ENCODE measurements at regions of chr4 and their contacts with region 1.

Region 1: DNA sequence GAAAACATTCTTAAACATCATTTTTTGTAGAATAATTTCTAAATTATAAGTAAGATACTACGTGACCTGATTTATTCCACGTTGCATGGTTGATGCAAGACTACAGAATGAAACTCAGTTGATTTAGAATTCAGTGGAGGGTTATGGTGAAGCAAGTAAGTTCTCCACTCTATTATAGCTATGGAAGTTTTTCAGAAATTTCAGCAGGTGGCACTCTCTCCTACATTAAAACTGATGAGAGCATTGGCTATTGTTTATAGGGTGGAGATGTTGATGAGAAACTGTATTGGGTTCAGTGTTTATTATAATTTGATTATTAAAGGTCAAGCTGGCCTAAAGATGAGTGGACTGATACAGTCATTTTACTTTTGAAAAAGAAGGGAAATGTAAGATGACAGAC is 88.0 kb downstream of the FNIP2 start:
- DNase-seq: no peak
- H3K4me3 Mint-ChIP-seq: no peak overlapping the region
- H3K27ac Mint-ChIP-seq: no peak overlapping the region
- H3K4me1 Mint-ChIP-seq: peaks cover 2% of the 10 kb centered on the region
- H3K27me3 Mint-ChIP-seq: no peaks in the 10 kb centered on the region

Region 2: GRCh38 chr4:159027535-159027934 is 170.7 kb after region 1 on chr4:
- intact Hi-C with region 1: no loop called
- DNase-seq: no peak
- H3K4me3 Mint-ChIP-seq: no peak overlapping the region
- H3K27ac Mint-ChIP-seq: no peak overlapping the region
- H3K4me1 Mint-ChIP-seq: no peaks in the 10 kb centered on the region
- H3K27me3 Mint-ChIP-seq: peaks cover 16% of the 10 kb centered on the region

Region 3: GRCh38 chr4:159175085-159175988 is 318.5 kb after region 1 on chr4:
- intact Hi-C with region 1: loop called (anchors 1 kb)
- DNase-seq: peak; percentile 31
- H3K4me3 Mint-ChIP-seq: no peak overlapping the region
- H3K27ac Mint-ChIP-seq: no peak overlapping the region
- H3K4me1 Mint-ChIP-seq: peaks cover 31% of the 10 kb centered on the region
- H3K27me3 Mint-ChIP-seq: peaks cover 14% of the 10 kb centered on the region

Region 4: GRCh38 chr4:159446266-159446976 is 589.6 kb after region 1 on chr4:
- intact Hi-C with region 1: loop called (anchors 2 kb)
- DNase-seq: peak; percentile 11
- H3K4me3 Mint-ChIP-seq: no peak overlapping the region
- H3K27ac Mint-ChIP-seq: no peak overlapping the region
- H3K4me1 Mint-ChIP-seq: no peaks in the 10 kb centered on the region
- H3K27me3 Mint-ChIP-seq: peaks cover 7% of the 10 kb centered on the region